GM10248 (cell line): ENCODE measurements at regions of chrX and their contacts with region 1.

Region 1: GRCh38 chrX:38896724-38897298 is 95.6 kb downstream of the MID1IP1 start:
- DNase-seq: peak; percentile 30
- CTCF ChIP-seq: no peak

Region 2: DNA sequence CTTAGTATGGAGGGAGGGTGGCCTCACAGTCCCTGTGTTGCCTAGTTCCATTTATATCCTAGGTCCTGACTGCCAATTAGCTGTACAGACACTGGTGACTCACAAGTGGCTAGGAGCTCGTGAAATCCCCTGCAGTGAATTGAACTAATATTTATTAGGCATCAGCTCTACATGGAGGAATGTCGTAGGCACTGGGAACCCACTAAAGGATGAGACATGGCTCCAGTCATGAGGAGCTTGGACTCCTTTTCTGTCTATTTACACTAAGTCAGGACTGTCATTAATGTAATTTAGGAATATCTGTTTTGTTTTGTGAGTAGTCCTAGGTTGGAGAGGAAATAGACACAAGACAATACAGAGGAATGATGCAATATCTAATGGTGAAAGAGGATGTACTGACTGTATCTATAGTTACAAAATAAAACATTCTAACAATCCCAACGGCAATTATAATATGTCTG is 27.8 kb before region 1 on chrX:
- CTCF ChIA-PET with region 1: no interaction called
- POLR2A ChIA-PET with region 1: no interaction called
- DNase-seq: no peak
- CTCF ChIP-seq: no peak

Region 3: DNA sequence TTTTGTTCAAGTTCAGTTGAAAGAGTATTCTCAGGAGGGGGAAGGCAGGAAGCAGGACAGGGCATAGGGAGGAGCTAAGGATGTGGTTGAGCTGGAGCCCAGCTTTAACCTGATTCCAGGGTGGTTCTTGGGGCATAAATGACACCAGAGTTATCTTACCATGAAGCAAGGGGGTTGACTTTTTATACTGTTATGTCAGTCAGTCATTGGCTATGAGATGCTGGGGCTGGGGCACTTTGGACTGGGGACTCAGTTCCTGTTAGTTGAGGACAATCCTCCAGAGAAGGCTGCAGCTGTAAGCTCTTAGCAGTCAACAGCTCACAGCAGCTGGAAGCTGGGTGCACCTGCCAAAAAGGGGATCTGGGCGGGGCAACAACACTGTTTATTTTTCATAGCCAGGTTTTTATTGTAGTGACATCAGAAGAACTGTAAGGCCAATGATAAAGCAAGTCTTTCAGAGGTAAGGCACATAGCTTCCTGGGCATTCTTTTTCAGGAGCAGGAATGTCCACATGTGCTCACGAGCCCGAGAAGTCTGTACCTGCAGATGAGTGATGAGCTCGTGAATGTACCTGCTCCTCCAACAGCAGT is 17.1 kb before region 1 on chrX:
- CTCF ChIA-PET with region 1: interaction called, 24 read pairs
- POLR2A ChIA-PET with region 1: no interaction called
- DNase-seq: peak; percentile 19
- CTCF ChIP-seq: no peak

Region 4: GRCh38 chrX:38939067-38939466 is 42.3 kb after region 1 on chrX:
- CTCF ChIA-PET with region 1: no interaction called
- POLR2A ChIA-PET with region 1: no interaction called
- DNase-seq: no peak
- CTCF ChIP-seq: no peak